ENCODE measurements at regions of chr2 and their contacts with region 1.

Region 1: GRCh38 chr2:118003396-118003824 is 10.5 kb downstream of the CCDC93 start:
- ATAC-seq: peak; percentile 83 to 99 (median 94)
- H3K4me3 ChIP-seq: no peak overlapping the region
- H3K27ac ChIP-seq: no peak overlapping the region
- H3K4me1 ChIP-seq: no peaks in the 10 kb centered on the region

Region 2: DNA sequence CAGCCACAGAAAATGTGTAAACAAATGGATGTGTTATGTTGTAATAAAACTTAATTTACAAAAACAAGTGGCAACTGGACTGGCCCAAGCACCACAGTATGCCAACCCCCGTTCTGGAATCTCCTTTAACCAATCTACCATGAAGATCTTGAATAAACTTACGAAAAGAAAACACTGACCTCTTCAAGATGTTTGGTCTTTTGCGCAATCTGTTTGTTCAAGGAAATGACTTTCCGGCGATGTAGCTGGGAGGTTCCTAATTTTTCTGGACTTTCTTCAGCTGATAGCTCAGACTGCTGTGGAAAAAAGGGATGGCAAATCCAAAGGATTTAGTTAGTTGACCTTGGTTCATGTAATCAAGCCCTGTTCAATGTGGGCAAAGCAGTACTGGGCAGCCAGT is 45.2 kb before region 1 on chr2:
- in situ Hi-C with region 1: loop called in 1 of 9 experiments (anchors 10 kb)
- ATAC-seq: peak in 2 of 8 experiments; percentile 21 to 88
- H3K4me3 ChIP-seq: no peak overlapping the region
- H3K27ac ChIP-seq: no peak overlapping the region
- H3K4me1 ChIP-seq: no peaks in the 10 kb centered on the region